Activated T-helper 1 cell treated with anti-CD3 and anti-CD28 coated beads, Interleukin-12 subunit alpha, Interleukin-12 subunit beta, Interleukin-2, Interleukin-4 antibody, amounts not matched to agents 30 ng/mL and 10 ng/mL and 1 ng/mL, durations not matched to agents 14 hours and 24 hours and 36 hours (primary cell): ENCODE measurements at regions of chr1 and their contacts with region 1.

Region 1: GRCh38 chr1:66503841-66504470 is 30.0 kb upstream of the SGIP1 start:
- DNase-seq: no peak
- H3K4me3 Mint-ChIP-seq: no peak overlapping the region
- H3K27ac Mint-ChIP-seq: no peak overlapping the region
- H3K4me1 Mint-ChIP-seq: no peaks in the 10 kb centered on the region
- H3K27me3 Mint-ChIP-seq: peaks cover 31% of the 10 kb centered on the region

Region 2: GRCh38 chr1:65509912-65510680 is 993.9 kb before region 1 on chr1:
- intact Hi-C with region 1: no loop called
- DNase-seq: no peak
- H3K4me3 Mint-ChIP-seq: no peak overlapping the region
- H3K27ac Mint-ChIP-seq: no peak overlapping the region
- H3K4me1 Mint-ChIP-seq: no peaks in the 10 kb centered on the region
- H3K27me3 Mint-ChIP-seq: no peaks in the 10 kb centered on the region

Region 3: DNA sequence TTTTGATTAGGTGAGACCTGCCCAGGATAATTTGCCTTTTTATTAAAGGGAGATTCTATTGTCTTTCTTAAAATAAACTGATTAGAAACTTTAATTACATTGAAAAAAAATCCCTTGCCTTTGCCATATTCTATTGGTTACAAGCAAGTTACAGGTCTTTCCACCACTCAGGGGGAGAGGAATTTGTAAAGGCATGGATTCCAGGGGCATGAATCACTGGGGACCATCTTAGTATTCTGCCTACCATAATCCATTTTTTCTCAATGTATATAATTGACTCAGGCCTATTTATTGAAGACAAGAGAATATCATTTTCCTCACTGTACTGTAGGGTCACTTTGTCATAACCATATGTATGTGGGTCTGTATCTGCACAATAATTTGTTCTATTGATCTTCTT is 835.6 kb before region 1 on chr1:
- intact Hi-C with region 1: no loop called
- DNase-seq: no peak
- H3K4me3 Mint-ChIP-seq: no peak overlapping the region
- H3K27ac Mint-ChIP-seq: no peak overlapping the region
- H3K4me1 Mint-ChIP-seq: no peaks in the 10 kb centered on the region
- H3K27me3 Mint-ChIP-seq: peaks cover 14% of the 10 kb centered on the region

Region 4: DNA sequence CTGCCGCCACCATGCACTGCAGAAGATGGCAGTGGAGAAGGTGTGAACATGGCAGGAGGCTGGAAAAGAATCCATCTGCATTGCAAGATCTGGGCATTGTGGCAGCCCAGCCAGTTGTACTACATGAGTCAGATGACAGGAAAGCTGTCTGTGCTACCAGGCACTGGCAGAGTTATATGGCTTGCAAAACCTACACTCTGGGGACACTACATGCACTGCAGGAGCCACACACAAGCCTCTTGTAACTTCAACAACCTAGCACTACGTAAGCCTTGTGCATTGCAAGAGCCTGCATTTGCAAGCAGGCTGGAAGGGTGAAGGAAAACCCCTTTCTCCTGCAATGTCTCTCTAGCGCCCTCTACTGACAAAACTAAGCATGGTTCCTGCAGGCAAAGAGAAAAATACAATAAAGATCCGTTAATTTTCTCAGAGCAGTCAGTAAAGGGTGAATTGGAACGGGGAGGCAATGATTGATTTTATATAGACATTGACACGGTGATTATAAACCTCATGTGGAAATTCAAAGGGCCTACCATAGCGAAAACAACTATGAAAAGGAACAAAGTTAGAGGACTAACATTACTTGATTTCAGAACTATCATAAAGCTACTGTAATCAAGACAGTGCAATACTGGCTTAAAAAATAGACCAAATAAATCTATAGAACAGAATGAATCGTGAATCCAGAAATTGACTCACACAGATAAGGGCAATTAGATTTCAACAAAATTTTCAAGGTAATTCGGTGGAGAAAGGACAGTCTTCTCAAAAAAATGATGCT is 222.1 kb after region 1 on chr1:
- intact Hi-C with region 1: loop called (anchors 5 kb)
- DNase-seq: peak; percentile 54
- H3K4me3 Mint-ChIP-seq: no peak overlapping the region
- H3K27ac Mint-ChIP-seq: no peak overlapping the region
- H3K4me1 Mint-ChIP-seq: peaks cover 19% of the 10 kb centered on the region
- H3K27me3 Mint-ChIP-seq: peaks cover 12% of the 10 kb centered on the region